Psoas muscle (tissue), 8 donors: ENCODE measurements at regions of chr9 and their contacts with region 1.

Region 1: GRCh38 chr9:119639287-119639962 is 270.2 kb upstream of the BRINP1 start:
- DNase-seq: no peak
- ATAC-seq: no peak
- H3K4me3 ChIP-seq: no peak overlapping the region
- H3K27ac ChIP-seq: no peak overlapping the region
- H3K4me1 ChIP-seq: no peaks in the 10 kb centered on the region
- H3K27me3 ChIP-seq: no peaks in the 10 kb centered on the region
- CTCF ChIP-seq: no peak

Region 2: DNA sequence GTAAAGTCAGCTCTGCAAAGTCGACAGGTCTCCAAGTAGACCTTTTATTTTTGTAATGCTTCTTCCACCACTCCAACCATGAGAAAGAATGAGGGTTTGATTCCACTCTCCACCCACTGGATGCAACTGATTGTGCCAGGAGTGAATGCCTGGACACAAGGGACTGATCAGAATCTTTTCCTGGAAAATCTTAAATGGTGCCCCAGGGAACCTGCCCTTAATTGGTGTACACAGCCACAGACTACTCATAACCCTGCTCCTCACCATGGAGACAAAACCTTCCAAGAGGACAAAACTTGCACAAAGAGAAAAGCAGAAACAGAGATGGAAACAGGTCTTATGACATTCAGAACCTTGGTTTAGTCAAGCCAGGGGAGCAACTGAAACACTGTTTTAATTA is 61.5 kb before region 1 on chr9:
- intact Hi-C with region 1: loop called in 1 of 2 experiments (anchors 10 kb)
- DNase-seq: no peak
- ATAC-seq: no peak
- H3K4me3 ChIP-seq: no peak overlapping the region
- H3K27ac ChIP-seq: no peak overlapping the region
- H3K4me1 ChIP-seq: no peaks in the 10 kb centered on the region
- H3K27me3 ChIP-seq: no peaks in the 10 kb centered on the region
- CTCF ChIP-seq: no peak

Region 3: GRCh38 chr9:119868694-119869093 is 229.3 kb after region 1 on chr9:
- intact Hi-C with region 1: loop called in 1 of 2 experiments (anchors 10 kb)
- DNase-seq: no peak
- ATAC-seq: no peak
- H3K4me3 ChIP-seq: no peak overlapping the region
- H3K27ac ChIP-seq: no peak overlapping the region
- H3K4me1 ChIP-seq: no peaks in the 10 kb centered on the region
- H3K27me3 ChIP-seq: peaks cover 0 to 3% (median 0%) of the 10 kb centered on the region in 3 donors
- CTCF ChIP-seq: no peak